Activated B cell treated with CpG ODN at 0.5 μM for 24 hours (primary cell): ENCODE measurements at regions of chr15 and their contacts with region 1.

Region 1: GRCh38 chr15:99250494-99251435 is 516 bp upstream of the LRRC28 start:
- DNase-seq: peak; percentile 85
- ATAC-seq: peak; percentile 97
- H3K4me3 Mint-ChIP-seq: peak overlapping the region; percentile 91
- H3K27ac Mint-ChIP-seq: peak overlapping the region; percentile 89
- H3K4me1 Mint-ChIP-seq: peaks cover 29% of the 10 kb centered on the region
- H3K27me3 Mint-ChIP-seq: no peaks in the 10 kb centered on the region
- CTCF ChIP-seq: no peak

Region 2: GRCh38 chr15:99733268-99734039 is 482.7 kb after region 1 on chr15 and contains the start of gene LYSMD4:
- CTCF ChIA-PET with region 1: interaction called, 4 read pairs
- POLR2A ChIA-PET with region 1: interaction called, 19 read pairs
- intact Hi-C with region 1: loop called (anchors 1 kb)
- DNase-seq: peak; percentile 95
- ATAC-seq: peak; percentile 99
- H3K4me3 Mint-ChIP-seq: peak within 1 kb of the TSS; percentile 85
- H3K27ac Mint-ChIP-seq: peak within 1 kb of the TSS; percentile 83
- H3K4me1 Mint-ChIP-seq: peaks cover 14% of the 10 kb centered on the region
- H3K27me3 Mint-ChIP-seq: no peaks in the 10 kb centered on the region
- CTCF ChIP-seq: no peak
- total RNA-seq, gene LYSMD4: 4.7 and 6.1 TPM in 2 replicates